AG04450 (cell line): ENCODE measurements at regions of chr22 and their contacts with region 1.

Region 1: DNA sequence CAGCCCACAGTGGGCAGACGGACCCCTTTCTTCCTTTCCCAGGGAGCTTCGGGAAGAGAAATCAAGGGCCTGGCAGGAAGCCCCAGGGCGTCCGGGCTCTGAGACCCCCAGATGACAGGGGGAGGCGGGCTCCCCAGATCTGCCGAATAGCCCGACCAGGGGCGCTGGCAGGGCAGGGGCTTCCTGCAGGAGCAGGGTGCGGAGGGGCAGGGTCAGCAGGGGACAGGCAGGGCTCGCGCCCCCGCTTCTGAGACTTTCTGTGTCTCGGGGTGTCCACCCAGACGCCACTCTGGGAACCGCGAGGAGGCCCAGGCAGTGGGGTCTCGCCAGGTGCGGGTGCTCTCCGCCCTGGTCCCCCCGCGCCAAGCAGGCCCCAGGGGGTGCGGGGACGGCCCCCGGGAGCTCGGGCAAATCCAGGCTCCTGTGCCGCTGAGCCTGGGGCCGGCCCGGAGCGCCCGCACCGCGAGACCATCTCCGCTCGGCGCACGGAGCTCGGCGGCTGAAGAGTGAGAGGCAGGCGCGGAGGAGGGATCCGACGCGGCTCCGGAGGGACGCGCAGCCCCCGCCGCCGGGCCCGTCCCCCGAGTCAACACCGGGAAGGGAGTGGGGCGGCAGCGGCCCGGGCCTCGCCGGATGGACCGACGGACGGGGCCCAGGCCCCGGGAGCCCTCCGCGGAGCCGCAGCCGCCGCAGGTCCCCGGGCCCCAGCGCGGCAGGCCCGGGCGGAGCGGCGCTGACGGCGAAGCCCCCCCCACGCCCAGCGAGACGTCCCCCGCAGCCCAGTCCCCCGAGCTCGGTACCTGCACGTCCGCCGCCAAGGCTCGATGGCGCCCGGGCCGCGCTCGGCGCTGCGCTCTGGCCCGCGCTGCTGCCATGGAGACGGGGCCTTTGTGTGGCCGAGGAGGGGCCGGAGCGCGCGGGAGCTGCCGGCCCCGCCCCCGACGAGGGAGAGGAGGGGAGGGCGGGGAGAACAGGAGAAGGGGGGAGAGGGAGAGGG is at the start of gene PLXNB2:
- DNase-seq: peak; percentile 34
- H3K4me3 ChIP-seq: peak within 1 kb of the TSS; percentile 93
- H3K27ac ChIP-seq: peak within 1 kb of the TSS; percentile 91
- H3K27me3 ChIP-seq: peaks cover under 1% of the 10 kb centered on the region
- CTCF ChIP-seq: no peak
- polyA plus RNA-seq, gene PLXNB2: 68.0 and 110 TPM in 2 replicates

Region 2: DNA sequence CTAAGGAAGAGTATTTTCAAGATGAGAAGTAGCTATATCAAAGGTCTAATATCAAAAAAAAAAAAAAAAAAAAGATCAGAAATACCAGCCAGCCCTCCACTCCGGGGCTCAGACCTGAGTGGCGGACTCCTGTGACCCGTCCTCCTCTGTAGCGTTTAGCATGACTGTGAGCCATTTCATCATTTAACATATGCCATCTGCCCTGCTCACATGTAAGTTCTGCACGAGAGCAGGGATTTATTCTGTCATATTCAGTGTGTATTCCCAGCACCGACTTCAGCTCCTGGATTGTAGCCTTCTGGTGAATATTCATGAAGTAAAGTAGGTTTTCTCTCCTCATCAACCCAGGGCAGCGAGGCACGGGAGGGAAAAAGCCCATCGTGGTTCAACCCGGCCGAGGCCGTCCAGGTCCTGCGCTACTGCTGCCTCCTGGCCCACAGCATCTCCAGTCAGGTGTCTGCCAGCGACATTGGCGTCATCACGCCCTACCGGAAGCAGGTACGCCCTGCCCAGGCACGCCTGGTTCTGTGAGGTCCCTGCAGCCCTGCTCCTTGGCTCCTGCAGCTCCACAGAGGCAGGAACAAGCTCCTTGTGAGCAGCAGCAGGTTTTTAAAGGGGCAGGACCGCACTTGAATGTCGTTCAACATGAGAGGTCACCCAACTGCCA is 149.2 kb before region 1 on chr22:
- CTCF ChIA-PET with region 1: no interaction called
- POLR2A ChIA-PET with region 1: no interaction called
- DNase-seq: no peak
- H3K4me3 ChIP-seq: no peak overlapping the region
- H3K27ac ChIP-seq: no peak overlapping the region
- H3K27me3 ChIP-seq: peaks cover 2% of the 10 kb centered on the region
- CTCF ChIP-seq: no peak

Region 3: GRCh38 chr22:50190182-50190940 is 116.7 kb before region 1 on chr22:
- CTCF ChIA-PET with region 1: no interaction called
- POLR2A ChIA-PET with region 1: no interaction called
- DNase-seq: no peak
- H3K4me3 ChIP-seq: peak overlapping the region; percentile 42
- H3K27ac ChIP-seq: peak overlapping the region; percentile 39
- H3K27me3 ChIP-seq: no peaks in the 10 kb centered on the region
- CTCF ChIP-seq: peak; percentile 24; the same call in 1 of the 2 replicates

Region 4: GRCh38 chr22:50293441-50294318 is 13.4 kb before region 1 on chr22:
- CTCF ChIA-PET with region 1: no interaction called
- POLR2A ChIA-PET with region 1: interaction called, 19 read pairs
- DNase-seq: no peak
- H3K4me3 ChIP-seq: peak overlapping the region; percentile 51
- H3K27ac ChIP-seq: peak overlapping the region; percentile 94
- H3K27me3 ChIP-seq: no peaks in the 10 kb centered on the region
- CTCF ChIP-seq: no peak

Region 5: DNA sequence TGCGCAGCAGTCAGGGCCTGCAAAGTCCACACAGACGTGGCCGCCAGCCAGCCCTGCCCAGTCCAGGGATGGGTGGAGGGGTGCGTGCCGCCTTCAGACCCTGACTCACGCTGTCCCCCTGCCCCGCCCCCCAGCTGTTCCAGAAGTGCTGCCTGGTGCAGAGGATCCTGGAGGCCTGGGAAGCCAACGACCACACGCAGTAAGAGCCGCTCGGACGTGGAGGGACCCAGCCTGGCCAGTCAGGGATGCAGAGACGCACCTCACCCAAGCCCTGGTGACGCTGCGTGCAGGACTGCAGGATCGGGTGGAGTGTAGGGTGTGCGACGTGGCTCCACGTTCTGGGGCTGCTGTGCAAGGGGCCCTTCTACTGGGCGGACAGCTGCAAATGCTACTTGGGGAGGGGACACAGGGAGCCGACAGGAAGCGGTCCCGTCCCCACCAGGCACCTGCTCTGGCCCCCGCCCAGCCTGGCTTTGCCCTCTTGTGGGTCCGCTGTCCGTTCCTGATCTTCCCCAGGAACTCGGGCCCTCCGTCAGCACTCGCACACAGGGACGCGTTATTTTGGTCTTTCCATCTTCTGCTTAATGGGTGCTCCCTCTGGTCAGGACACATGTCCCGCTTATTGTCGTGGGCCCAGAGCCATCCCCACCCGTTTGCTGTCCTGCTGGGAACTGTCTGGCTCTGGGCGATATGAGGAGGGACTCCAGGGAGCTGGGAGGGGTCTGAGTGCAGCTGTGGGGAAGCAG is 125.3 kb after region 1 on chr22:
- CTCF ChIA-PET with region 1: no interaction called
- POLR2A ChIA-PET with region 1: no interaction called
- DNase-seq: no peak
- H3K4me3 ChIP-seq: no peak overlapping the region
- H3K27ac ChIP-seq: no peak overlapping the region
- H3K27me3 ChIP-seq: no peaks in the 10 kb centered on the region
- CTCF ChIP-seq: no peak

Region 6: DNA sequence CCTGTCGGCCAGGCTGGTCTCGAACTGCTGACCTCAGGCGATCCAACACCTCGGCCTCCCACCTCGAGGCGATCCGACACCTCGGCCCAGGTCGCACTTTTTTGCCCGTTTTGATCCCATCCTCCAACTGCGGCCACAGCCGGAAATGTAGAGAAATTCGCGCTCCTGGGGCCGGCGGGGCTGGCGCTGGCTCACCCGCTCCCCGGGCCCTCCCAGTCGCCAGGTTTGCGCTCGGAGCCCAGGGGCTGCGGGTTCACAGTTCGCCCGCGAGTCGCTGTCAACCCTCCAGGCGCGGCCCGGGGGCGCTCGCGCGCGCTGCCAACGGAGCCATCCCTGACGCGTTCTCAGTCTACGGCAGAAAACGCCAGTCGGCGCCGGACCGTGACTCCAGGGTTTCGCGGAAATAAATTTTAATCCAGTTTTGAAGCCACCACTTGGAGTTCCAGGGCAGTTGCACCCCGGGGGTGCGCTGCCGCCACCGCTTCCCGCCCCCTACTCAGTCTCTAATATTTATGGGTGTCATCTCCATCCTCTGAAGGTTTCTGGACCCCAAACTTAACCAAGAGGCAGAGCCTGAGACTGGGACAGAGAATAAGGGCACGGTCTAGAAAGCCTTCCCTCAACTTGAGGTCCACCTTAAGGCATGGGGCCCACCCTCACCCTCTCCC is 237.2 kb after region 1 on chr22:
- CTCF ChIA-PET with region 1: no interaction called
- POLR2A ChIA-PET with region 1: no interaction called
- DNase-seq: no peak
- H3K4me3 ChIP-seq: peak overlapping the region; percentile 31; the same call in 1 of the 2 replicates
- H3K27ac ChIP-seq: no peak overlapping the region
- H3K27me3 ChIP-seq: peaks cover 31% of the 10 kb centered on the region
- CTCF ChIP-seq: peak; percentile 61